B cell (primary cell): ENCODE measurements at regions of chr7 and their contacts with region 1.

Region 1: DNA sequence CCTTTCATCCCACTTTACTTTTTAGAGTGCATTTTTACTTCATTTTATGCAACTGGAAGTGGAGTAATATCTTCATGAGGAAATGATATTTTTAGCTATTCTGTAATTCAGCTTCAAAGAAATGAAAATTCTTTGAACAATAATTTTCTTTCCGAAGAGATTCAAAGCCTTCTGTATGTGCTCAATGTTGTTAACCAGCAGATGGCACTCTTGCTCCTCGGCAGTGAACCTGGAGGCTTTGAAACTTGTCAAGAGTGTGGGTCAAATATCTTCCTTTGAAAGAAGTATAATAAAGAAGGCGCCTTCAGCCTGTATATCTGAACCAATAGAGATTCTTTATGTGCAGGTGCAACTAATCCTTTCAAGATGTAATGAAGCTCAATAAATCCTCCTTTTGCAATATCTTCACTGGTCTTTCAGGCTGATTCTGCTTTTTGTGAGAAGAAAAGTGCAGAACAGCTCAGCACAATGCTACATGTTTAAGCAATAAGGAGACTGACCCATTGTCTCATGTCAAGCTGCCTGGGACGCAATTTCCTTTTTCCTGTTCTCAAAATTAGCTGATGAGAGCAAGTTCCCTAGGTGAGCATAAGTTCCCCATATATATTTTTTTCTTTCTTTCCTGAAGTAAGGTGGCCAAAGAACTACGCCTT is 258.4 kb downstream of the SEMA3A start:
- DNase-seq: peak; percentile 25
- ATAC-seq: no peak
- H3K4me3 ChIP-seq: no peak overlapping the region
- H3K4me3 Mint-ChIP-seq: no peak overlapping the region
- H3K27ac ChIP-seq: no peak overlapping the region
- H3K27ac Mint-ChIP-seq: no peak overlapping the region
- H3K4me1 ChIP-seq: no peaks in the 10 kb centered on the region
- H3K4me1 Mint-ChIP-seq: no peaks in the 10 kb centered on the region
- H3K27me3 ChIP-seq: no peaks in the 10 kb centered on the region
- H3K27me3 Mint-ChIP-seq: no peaks in the 10 kb centered on the region
- CTCF ChIP-seq: peak; percentile 58

Region 2: DNA sequence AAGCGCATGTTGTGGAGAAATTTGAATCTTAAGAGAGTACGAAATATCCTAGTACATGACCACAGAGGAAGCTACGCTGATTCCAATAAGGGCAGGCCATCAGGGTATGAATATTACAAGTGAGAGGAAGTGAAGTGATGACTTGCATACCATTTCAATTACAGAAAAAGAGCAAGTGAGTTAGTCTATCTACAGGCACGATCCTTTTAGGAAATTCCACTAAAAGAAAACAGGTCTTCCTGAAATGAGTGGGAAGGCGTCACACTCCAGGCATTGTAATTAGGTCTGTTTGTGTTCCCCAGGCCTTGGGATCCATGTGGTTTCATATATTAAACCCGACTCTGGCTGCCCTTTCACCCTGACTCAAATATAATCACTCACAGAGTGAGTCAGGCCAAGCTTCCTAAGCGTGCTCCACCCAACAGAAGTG is 105.9 kb after region 1 on chr7:
- CTCF ChIA-PET with region 1: no interaction called
- POLR2A ChIA-PET with region 1: no interaction called
- intact Hi-C with region 1: no loop called
- DNase-seq: no peak
- ATAC-seq: no peak
- H3K4me3 ChIP-seq: no peak overlapping the region
- H3K4me3 Mint-ChIP-seq: no peak overlapping the region
- H3K27ac ChIP-seq: no peak overlapping the region
- H3K27ac Mint-ChIP-seq: no peak overlapping the region
- H3K4me1 ChIP-seq: no peaks in the 10 kb centered on the region
- H3K4me1 Mint-ChIP-seq: no peaks in the 10 kb centered on the region
- H3K27me3 ChIP-seq: no peaks in the 10 kb centered on the region
- H3K27me3 Mint-ChIP-seq: no peaks in the 10 kb centered on the region
- CTCF ChIP-seq: no peak

Region 3: GRCh38 chr7:85554236-85555178 is 1618.3 kb after region 1 on chr7:
- CTCF ChIA-PET with region 1: no interaction called
- POLR2A ChIA-PET with region 1: no interaction called
- intact Hi-C with region 1: loop called (anchors 5 kb)
- DNase-seq: peak; percentile 58
- ATAC-seq: peak; percentile 43
- H3K4me3 ChIP-seq: no peak overlapping the region
- H3K4me3 Mint-ChIP-seq: no peak overlapping the region
- H3K27ac ChIP-seq: no peak overlapping the region
- H3K27ac Mint-ChIP-seq: no peak overlapping the region
- H3K4me1 ChIP-seq: no peaks in the 10 kb centered on the region
- H3K4me1 Mint-ChIP-seq: no peaks in the 10 kb centered on the region
- H3K27me3 ChIP-seq: no peaks in the 10 kb centered on the region
- H3K27me3 Mint-ChIP-seq: no peaks in the 10 kb centered on the region
- CTCF ChIP-seq: peak; percentile 84